CD14-positive monocyte (primary cell): ENCODE measurements at regions of chr6 and their contacts with region 1.

Region 1: DNA sequence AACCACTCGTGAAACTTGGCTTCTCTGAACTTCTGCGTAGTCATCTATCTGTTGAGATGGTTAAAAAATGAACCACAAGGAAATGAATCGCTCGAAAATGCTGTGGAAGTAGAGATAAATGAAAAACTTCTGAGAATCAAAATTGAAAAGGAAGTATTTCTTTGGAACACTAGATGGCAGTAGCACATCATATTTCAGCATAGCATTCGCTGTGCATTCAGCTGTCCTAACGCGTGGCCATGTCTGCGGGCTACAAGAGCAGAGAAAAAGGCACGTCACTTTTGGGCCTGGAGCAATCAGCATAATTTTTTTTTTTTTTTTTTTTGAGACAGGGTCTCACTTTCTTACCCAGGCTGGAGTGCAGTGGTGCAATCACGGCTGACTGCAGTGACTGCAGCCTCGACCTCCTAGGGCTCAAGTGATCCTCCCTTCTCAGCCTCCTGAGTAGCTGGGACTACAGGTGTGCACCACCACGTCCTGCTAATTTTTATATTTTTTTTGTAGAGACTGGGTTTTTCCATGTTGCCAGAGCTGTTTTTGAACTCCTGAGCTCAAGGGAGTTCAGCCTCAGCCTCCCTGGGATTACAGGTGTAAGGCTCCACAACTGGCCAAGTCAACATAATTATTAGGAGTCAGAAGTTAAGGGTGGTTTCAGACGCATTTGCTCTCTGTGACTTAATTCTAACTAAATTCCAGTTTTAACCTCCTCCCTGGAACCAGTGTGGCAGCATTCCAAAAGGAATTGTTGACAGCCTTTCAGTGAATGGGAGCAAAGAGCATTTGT is 8.8 kb upstream of the PERP start:
- DNase-seq: peak; percentile 54 to 69 (median 64)
- H3K4me3 ChIP-seq: no peak overlapping the region
- H3K4me3 Mint-ChIP-seq: no peak overlapping the region
- H3K27ac ChIP-seq: no peak overlapping the region
- H3K27ac Mint-ChIP-seq: no peak overlapping the region
- H3K4me1 ChIP-seq: no peaks in the 10 kb centered on the region
- H3K4me1 Mint-ChIP-seq: peaks cover 7% of the 10 kb centered on the region
- H3K27me3 ChIP-seq: no peaks in the 10 kb centered on the region
- H3K27me3 Mint-ChIP-seq: peaks cover 8 to 16% (median 11%) of the 10 kb centered on the region in 3 donors
- CTCF ChIP-seq: peak; percentile 74

Region 2: GRCh38 chr6:137951064-137951597 is 164.9 kb before region 1 on chr6:
- intact Hi-C with region 1: no loop called
- DNase-seq: peak; percentile 51 to 77 (median 61)
- H3K4me3 ChIP-seq: no peak overlapping the region
- H3K4me3 Mint-ChIP-seq: peak overlapping the region in 1 of 2 donors; percentile 49
- H3K27ac ChIP-seq: no peak overlapping the region
- H3K27ac Mint-ChIP-seq: peak overlapping the region in 5 of 7 donors; percentile 3 to 88 (median 64)
- H3K4me1 ChIP-seq: peaks cover 11 to 12% of the 10 kb centered on the region in 2 donors
- H3K4me1 Mint-ChIP-seq: peaks cover 14% of the 10 kb centered on the region
- H3K27me3 ChIP-seq: no peaks in the 10 kb centered on the region
- H3K27me3 Mint-ChIP-seq: peaks cover 0 to 6% (median 2%) of the 10 kb centered on the region in 3 donors
- CTCF ChIP-seq: peak; percentile 51

Region 3: DNA sequence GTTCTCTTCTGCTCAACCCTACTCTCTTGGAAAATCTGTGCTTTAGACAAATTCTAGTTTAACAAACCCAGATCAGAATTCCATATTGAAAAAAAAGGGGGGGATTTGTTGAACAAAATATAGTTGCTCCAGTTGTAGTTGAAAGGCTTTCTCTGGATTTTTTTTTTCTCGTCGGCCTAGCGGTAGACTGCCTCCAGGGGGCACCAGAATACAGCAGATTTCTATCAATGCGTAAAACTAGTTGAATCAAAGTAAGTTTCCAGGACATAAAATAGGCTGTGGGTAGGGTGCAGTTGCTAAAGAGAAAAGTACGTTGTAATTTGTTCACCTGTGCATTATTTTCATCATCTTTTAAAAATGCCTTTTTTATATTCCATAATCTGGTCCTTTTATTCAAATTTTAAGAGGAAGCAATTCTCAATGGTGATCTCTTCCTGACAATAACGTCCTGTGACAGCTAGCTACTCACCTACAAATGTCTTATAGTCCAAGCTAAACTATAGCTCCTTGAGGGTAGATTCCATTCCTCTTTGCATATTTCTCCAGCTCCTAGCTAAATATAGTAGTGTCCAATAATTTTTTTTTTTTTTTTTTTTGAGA is 114.2 kb before region 1 on chr6:
- intact Hi-C with region 1: loop called in 1 of 2 experiments (anchors 5 kb)
- DNase-seq: peak; percentile 25 to 52 (median 45)
- H3K4me3 ChIP-seq: no peak overlapping the region
- H3K4me3 Mint-ChIP-seq: no peak overlapping the region
- H3K27ac ChIP-seq: no peak overlapping the region
- H3K27ac Mint-ChIP-seq: no peak overlapping the region
- H3K4me1 ChIP-seq: peaks cover 0 to 9% of the 10 kb centered on the region in 2 donors
- H3K4me1 Mint-ChIP-seq: peaks cover 7% of the 10 kb centered on the region
- H3K27me3 ChIP-seq: no peaks in the 10 kb centered on the region
- H3K27me3 Mint-ChIP-seq: peaks cover 0 to 20% (median 9%) of the 10 kb centered on the region in 3 donors
- CTCF ChIP-seq: peak; percentile 88

Region 4: GRCh38 chr6:138157986-138158638 is 42.0 kb after region 1 on chr6:
- intact Hi-C with region 1: no loop called
- DNase-seq: no peak
- H3K4me3 ChIP-seq: no peak overlapping the region
- H3K4me3 Mint-ChIP-seq: peak overlapping the region in 1 of 2 donors; percentile 8
- H3K27ac ChIP-seq: no peak overlapping the region
- H3K27ac Mint-ChIP-seq: no peak overlapping the region
- H3K4me1 ChIP-seq: peaks cover 10 to 15% of the 10 kb centered on the region in 2 donors
- H3K4me1 Mint-ChIP-seq: peaks cover 15% of the 10 kb centered on the region
- H3K27me3 ChIP-seq: peaks cover 49 to 62% of the 10 kb centered on the region in 2 donors
- H3K27me3 Mint-ChIP-seq: peaks cover 46 to 65% (median 48%) of the 10 kb centered on the region in 3 donors
- CTCF ChIP-seq: no peak

Region 5: GRCh38 chr6:138287144-138287955 is 171.3 kb after region 1 on chr6:
- intact Hi-C with region 1: loop called in 1 of 2 experiments (anchors 5 kb)
- DNase-seq: no peak
- H3K4me3 ChIP-seq: no peak overlapping the region
- H3K4me3 Mint-ChIP-seq: no peak overlapping the region
- H3K27ac ChIP-seq: no peak overlapping the region
- H3K27ac Mint-ChIP-seq: no peak overlapping the region
- H3K4me1 ChIP-seq: no peaks in the 10 kb centered on the region
- H3K4me1 Mint-ChIP-seq: no peaks in the 10 kb centered on the region
- H3K27me3 ChIP-seq: no peaks in the 10 kb centered on the region
- H3K27me3 Mint-ChIP-seq: peaks cover 0 to 6% (median 0%) of the 10 kb centered on the region in 3 donors
- CTCF ChIP-seq: peak; percentile 47

Region 6: GRCh38 chr6:138517635-138518034 is 401.6 kb after region 1 on chr6:
- intact Hi-C with region 1: loop called (anchors 5 kb)
- DNase-seq: peak; percentile 38 to 66 (median 61)
- H3K4me3 ChIP-seq: no peak overlapping the region
- H3K4me3 Mint-ChIP-seq: no peak overlapping the region
- H3K27ac ChIP-seq: no peak overlapping the region
- H3K27ac Mint-ChIP-seq: peak overlapping the region in 2 of 7 donors; percentile 19 to 78
- H3K4me1 ChIP-seq: peaks cover 17 to 20% of the 10 kb centered on the region in 2 donors
- H3K4me1 Mint-ChIP-seq: peaks cover 17% of the 10 kb centered on the region
- H3K27me3 ChIP-seq: no peaks in the 10 kb centered on the region
- H3K27me3 Mint-ChIP-seq: peaks cover 0 to 9% (median 0%) of the 10 kb centered on the region in 3 donors
- CTCF ChIP-seq: peak; percentile 90

Region 7: GRCh38 chr6:138773177-138774091 is 657.4 kb after region 1 on chr6 and contains the start of gene CCDC28A:
- intact Hi-C with region 1: loop called in 1 of 2 experiments (anchors 10 kb)
- DNase-seq: peak; percentile 93 to 94 (median 94)
- H3K4me3 ChIP-seq: peak within 1 kb of the TSS; percentile 74 to 95 (median 75)
- H3K4me3 Mint-ChIP-seq: peak within 1 kb of the TSS; percentile 98 to 100
- H3K27ac ChIP-seq: peak within 1 kb of the TSS; percentile 93 to 99
- H3K27ac Mint-ChIP-seq: peak within 1 kb of the TSS; percentile 99 to 100 (median 100)
- H3K4me1 ChIP-seq: peaks cover 20 to 24% of the 10 kb centered on the region in 2 donors
- H3K4me1 Mint-ChIP-seq: peaks cover 19% of the 10 kb centered on the region
- H3K27me3 ChIP-seq: no peaks in the 10 kb centered on the region
- H3K27me3 Mint-ChIP-seq: peaks cover 0 to 2% (median 0%) of the 10 kb centered on the region in 3 donors
- CTCF ChIP-seq: no peak
- polyA plus RNA-seq, gene CCDC28A: 16.6 to 53.3 (median 42.6) TPM